ENCODE measurements at regions of chr2 and their contacts with region 1.

Region 1: GRCh38 chr2:168495524-168495923 is 39.5 kb downstream of the CERS6 start:
- DNase-seq: no peak
- H3K4me3 Mint-ChIP-seq: no peak overlapping the region
- H3K27ac Mint-ChIP-seq: peak overlapping the region; percentile 65
- H3K4me1 Mint-ChIP-seq: peaks cover 62% of the 10 kb centered on the region
- H3K27me3 Mint-ChIP-seq: peaks cover 3% of the 10 kb centered on the region

Region 2: GRCh38 chr2:168470320-168471162 is 25.0 kb before region 1 on chr2:
- intact Hi-C with region 1: no loop called
- DNase-seq: no peak
- H3K4me3 Mint-ChIP-seq: no peak overlapping the region
- H3K27ac Mint-ChIP-seq: no peak overlapping the region
- H3K4me1 Mint-ChIP-seq: peaks cover 45% of the 10 kb centered on the region
- H3K27me3 Mint-ChIP-seq: no peaks in the 10 kb centered on the region

Region 3: GRCh38 chr2:168536925-168537466 is 41.5 kb after region 1 on chr2:
- intact Hi-C with region 1: loop called (anchors 1 kb)
- DNase-seq: no peak
- H3K4me3 Mint-ChIP-seq: no peak overlapping the region
- H3K27ac Mint-ChIP-seq: no peak overlapping the region
- H3K4me1 Mint-ChIP-seq: peaks cover 44% of the 10 kb centered on the region
- H3K27me3 Mint-ChIP-seq: no peaks in the 10 kb centered on the region

Region 4: GRCh38 chr2:168601741-168602140 is 106.2 kb after region 1 on chr2:
- intact Hi-C with region 1: no loop called
- DNase-seq: no peak
- H3K4me3 Mint-ChIP-seq: no peak overlapping the region
- H3K27ac Mint-ChIP-seq: no peak overlapping the region
- H3K4me1 Mint-ChIP-seq: peaks cover 6% of the 10 kb centered on the region
- H3K27me3 Mint-ChIP-seq: no peaks in the 10 kb centered on the region

Region 5: GRCh38 chr2:168687314-168687713 is 191.8 kb after region 1 on chr2:
- intact Hi-C with region 1: loop called (anchors 1 kb)
- DNase-seq: no peak
- H3K4me3 Mint-ChIP-seq: no peak overlapping the region
- H3K27ac Mint-ChIP-seq: no peak overlapping the region
- H3K4me1 Mint-ChIP-seq: peaks cover 15% of the 10 kb centered on the region
- H3K27me3 Mint-ChIP-seq: no peaks in the 10 kb centered on the region

Measured in activated T-helper 1 cell treated with anti-CD3 and anti-CD28 coated beads, Interleukin-12 subunit alpha, Interleukin-12 subunit beta, Interleukin-2, Interleukin-4 antibody, amounts not matched to agents 30 ng/mL and 10 ng/mL and 1 ng/mL, durations not matched to agents 14 hours and 24 hours and 36 hours (primary cell).